ENCODE measurements at regions of chr16 and their contacts with region 1.

Region 1: GRCh38 chr16:3274490-3274889 is 8.8 kb upstream of the ZNF263 start:
- DNase-seq: no peak
- ATAC-seq: no peak
- H3K4me3 ChIP-seq: no peak overlapping the region
- H3K27ac ChIP-seq: no peak overlapping the region
- H3K4me1 ChIP-seq: no peaks in the 10 kb centered on the region
- H3K27me3 ChIP-seq: no peaks in the 10 kb centered on the region; the same call in 1 of the 2 replicates
- CTCF ChIP-seq: no peak

Region 2: DNA sequence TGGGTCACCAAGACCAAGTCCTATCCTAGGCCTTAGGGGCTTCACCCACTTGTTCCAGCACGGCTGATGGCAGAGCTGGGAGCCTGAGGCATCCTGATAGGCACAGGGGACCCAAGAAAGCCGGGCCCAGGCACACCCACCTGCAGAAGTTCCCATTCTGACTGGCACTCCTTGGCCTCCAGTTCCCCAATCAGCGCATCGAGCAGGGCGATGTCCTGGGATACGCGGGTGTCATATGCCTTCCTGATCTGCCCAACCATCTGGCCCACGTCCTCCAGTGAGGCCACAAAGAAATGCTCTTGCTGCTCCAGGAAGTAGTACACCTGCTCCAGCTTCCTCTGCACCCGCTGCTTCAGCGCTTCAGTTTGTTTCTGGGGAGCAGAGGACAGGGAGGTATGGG is 27.6 kb before region 1 on chr16:
- CTCF ChIA-PET with region 1: no interaction called
- POLR2A ChIA-PET with region 1: interaction called, 15 read pairs
- in situ Hi-C with region 1: no loop called
- intact Hi-C with region 1: no loop called
- DNase-seq: no peak
- ATAC-seq: no peak
- H3K4me3 ChIP-seq: no peak overlapping the region
- H3K27ac ChIP-seq: no peak overlapping the region
- H3K4me1 ChIP-seq: no peaks in the 10 kb centered on the region
- H3K27me3 ChIP-seq: no peaks in the 10 kb centered on the region
- CTCF ChIP-seq: no peak

Measured in Panc1 (cell line).